Dorsolateral prefrontal cortex (tissue), 120 donors: ENCODE measurements at regions of chr2 and their contacts with region 1.

Region 1: GRCh38 chr2:120680136-120680761 is 55.4 kb upstream of the GLI2 start:
- DNase-seq: peak; percentile 68 to 89 (median 84)
- H3K4me3 ChIP-seq: peak overlapping the region in 3 of 59 donors; percentile 17 to 23 (median 23)
- H3K27ac ChIP-seq: no peak overlapping the region
- H3K27me3 ChIP-seq: peaks cover 0 to 22% (median 5%) of the 10 kb centered on the region in 45 donors
- CTCF ChIP-seq: peak in 54 of 56 donors; percentile 34 to 73 (median 59)

Region 2: DNA sequence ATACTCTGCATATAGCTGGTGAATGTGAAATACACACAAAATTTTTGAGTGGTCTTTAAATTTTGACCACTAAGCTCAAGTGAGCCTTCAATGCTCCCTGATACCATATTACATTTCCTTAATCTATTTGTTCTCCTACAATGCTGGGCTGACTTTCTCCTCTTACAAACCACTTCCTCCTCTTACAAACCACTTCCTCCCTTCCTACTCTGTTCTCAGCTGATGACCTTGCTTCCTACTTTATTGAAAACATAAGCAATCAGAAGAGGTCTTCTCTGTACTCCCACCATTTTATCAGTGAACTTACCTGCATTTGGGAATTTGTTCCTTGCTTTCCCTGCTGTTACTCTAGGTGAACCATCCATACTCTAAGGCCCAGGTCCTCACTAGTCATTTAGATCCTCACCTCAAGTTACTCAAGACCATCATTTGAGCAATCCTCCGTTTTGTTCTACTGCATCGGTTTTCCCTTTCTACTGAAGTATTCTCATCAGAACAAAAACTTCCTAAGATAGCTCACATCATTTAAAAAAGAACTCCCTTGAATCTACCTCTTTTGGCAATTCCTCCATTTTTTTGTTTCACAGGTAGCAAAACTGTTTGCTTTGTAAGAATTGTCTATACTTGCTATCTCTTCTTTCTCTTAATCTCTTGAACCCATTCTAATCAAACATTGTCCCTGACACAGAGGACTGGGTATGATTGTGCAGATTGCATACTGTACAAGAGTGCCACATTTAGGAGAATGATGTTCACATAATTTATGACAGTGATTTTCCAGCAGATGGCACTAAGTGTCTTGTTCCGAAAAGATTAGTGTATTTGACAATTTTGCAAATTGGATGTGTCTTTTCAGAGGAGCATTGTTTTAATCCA is 570.8 kb before region 1 on chr2:
- intact Hi-C with region 1: loop called in 1 of 2 experiments (anchors 10 kb)
- DNase-seq: no peak
- H3K4me3 ChIP-seq: no peak overlapping the region
- H3K27ac ChIP-seq: peak overlapping the region in 1 of 59 donors; percentile 22
- H3K27me3 ChIP-seq: no peaks in the 10 kb centered on the region
- CTCF ChIP-seq: peak; percentile 30 to 82 (median 62)

Region 3: DNA sequence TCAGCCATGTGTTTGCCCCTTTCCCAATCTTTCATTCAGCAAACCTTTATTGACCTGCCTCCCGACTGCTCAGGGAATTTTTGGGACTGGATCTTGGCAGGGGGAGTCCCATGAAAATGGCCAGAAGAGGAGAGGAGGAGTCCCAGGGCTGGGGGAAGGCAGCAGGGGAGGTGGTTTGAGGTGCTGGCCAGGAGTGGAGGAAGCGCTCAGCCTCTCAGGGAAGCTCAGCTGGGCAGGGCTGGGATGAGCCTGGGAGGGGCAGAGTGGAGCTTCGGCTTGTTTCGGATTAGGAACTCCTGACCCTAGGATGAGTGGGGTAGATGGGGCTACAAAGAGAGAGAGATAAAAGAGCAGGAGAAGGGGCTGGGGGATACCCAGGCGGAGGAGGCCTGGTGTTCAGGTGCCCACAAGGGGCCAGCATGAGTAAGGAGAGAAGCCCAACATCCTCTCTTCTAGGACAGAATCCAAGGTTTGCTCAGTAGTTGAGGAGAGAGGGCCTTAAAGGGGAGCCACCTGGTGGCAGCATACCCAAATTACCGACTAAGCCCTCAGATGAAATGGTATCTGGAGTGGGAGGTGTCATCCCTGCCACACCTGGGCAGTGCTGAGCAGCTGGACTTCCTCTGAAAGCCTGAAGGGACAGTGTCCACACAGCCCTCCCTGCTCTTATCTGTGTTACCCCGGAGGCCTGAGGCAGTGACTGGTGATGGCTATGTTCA is 243.2 kb before region 1 on chr2:
- intact Hi-C with region 1: loop called (anchors 5 to 10 kb)
- DNase-seq: peak in 2 of 10 donors; percentile 0 to 19
- H3K4me3 ChIP-seq: no peak overlapping the region
- H3K27ac ChIP-seq: no peak overlapping the region
- H3K27me3 ChIP-seq: peaks cover 0 to 39% (median 3%) of the 10 kb centered on the region in 45 donors
- CTCF ChIP-seq: peak in 28 of 56 donors; percentile 6 to 34 (median 25)

Region 4: GRCh38 chr2:120520929-120521912 is 159.0 kb before region 1 on chr2:
- intact Hi-C with region 1: loop called in 1 of 2 experiments (anchors 5 kb)
- DNase-seq: peak in 4 of 10 donors; percentile 31 to 43 (median 40)
- H3K4me3 ChIP-seq: no peak overlapping the region
- H3K27ac ChIP-seq: no peak overlapping the region
- H3K27me3 ChIP-seq: peaks cover 0 to 29% (median 5%) of the 10 kb centered on the region in 45 donors
- CTCF ChIP-seq: peak in 55 of 56 donors; percentile 16 to 74 (median 65)

Region 5: DNA sequence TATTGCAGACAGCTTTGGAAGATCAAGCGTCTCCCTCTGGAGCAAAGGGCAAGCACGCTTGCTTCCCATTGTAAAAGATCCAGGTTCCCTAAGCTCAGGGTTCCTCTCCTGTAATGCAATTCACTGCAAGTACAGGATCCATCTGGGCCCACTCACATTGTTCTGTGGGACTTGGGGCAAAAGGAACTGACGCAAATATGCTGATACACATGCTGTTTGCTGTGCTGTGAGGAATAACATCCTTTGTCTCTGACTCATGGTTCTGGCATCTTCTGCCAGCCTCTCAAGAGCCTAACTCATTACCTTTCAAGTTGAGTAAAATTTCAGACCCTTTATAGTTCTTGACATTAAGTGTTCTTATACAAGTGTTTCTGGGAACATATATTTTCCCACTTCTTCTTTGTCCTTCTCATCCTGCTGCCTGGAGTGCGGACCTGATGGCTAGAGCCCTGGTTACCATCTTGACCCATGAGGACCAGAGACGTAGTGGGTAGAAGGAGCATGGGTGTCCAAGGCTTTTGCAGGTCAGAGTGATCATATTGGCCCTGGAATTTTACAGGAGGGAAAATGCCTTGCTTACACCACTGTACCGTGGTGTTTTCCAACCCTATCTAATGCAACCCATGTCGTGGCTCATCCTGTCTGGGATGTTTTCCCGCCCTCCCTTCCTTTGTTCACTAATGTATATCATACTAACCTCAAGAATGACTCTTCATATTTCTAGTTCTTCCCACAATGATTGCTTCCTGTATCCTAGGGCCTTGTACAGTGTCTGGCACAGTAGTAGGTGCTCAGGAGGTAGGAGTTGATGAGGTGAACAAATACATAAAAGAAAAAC is 90.3 kb before region 1 on chr2:
- intact Hi-C with region 1: loop called in 1 of 2 experiments (anchors 2 kb)
- DNase-seq: no peak
- H3K4me3 ChIP-seq: no peak overlapping the region
- H3K27ac ChIP-seq: no peak overlapping the region
- H3K27me3 ChIP-seq: peaks cover 0 to 15% (median 0%) of the 10 kb centered on the region in 45 donors
- CTCF ChIP-seq: no peak